Dorsolateral prefrontal cortex (tissue), 120 donors: ENCODE measurements at regions of chr2 and their contacts with region 1.

Region 1: DNA sequence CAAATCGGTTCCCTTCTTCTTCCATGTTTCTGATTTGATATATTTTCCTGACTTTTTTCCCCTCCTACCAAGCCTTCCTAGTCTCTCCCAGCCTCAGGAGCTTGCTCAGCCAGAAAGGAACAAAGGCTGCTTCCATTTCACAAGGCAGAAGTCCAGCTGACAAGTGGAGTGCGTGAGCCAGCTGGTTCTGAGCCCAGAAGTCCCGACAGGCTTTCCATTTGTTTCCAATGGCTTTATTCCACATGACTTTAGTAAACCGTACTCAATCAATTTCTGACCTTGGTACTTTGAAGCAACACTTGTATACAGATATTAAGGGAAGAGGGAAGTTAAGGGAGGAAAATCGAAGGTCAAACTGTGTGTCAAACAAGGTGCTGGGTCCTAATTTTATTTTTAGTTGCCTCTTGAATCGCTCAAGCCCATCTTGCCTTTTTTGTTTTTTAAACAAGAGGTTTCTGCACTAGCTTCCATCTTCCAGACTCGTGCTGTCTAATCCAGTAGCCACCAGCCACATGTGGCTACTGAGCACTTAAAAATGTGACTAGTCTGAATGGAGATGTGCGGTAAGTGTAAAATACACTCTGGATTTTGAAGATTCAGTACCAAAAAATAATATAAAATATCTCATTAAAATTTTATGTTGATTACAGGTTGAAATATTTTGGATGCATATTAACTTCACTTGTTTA is 36.2 kb downstream of the WIPF1 start:
- DNase-seq: peak; percentile 64 to 92 (median 84)
- H3K4me3 ChIP-seq: peak overlapping the region in 20 of 59 donors; percentile 1 to 46 (median 16)
- H3K27ac ChIP-seq: peak overlapping the region in 54 of 59 donors; percentile 3 to 86 (median 74)
- H3K27me3 ChIP-seq: no peaks in the 10 kb centered on the region
- CTCF ChIP-seq: peak in 17 of 56 donors; percentile 7 to 47 (median 19)

Region 2: DNA sequence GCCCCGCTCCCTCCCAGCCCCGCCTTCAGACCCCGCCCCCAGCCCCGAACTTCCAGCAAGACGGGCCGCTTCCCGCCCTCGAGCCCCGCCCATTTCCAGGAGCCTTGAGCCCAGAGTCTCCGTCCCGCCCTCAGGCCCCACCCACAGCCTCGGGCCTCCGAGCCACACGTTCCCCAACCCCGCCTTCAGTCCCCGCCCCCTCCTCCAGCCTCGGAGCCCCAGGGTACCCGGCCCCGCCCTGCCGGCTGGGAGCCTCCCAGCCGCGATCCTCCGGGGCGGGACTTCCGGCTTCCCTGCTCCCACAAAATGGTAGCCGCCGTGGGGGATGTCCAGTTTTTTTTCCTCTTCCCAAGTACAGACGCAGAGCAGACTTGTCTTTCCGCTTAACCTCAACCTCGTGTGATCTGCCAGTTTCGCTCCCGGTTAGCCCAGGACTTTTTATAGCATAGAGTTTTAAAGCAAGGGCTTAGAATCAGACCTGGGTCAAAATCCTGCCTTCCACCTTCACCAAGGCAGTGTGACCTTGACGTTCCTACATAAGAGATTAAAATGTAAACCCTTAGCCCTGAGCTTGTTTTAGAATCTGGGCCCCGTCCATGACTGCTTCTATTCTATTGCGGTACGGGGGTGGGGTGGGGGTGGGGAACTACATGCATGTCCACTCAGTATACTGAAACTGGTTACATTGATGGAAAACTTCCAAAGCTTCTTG is 74.2 kb before region 1 on chr2:
- intact Hi-C with region 1: loop called in 1 of 2 experiments (anchors 5 kb)
- DNase-seq: peak; percentile 93 to 99 (median 98)
- H3K4me3 ChIP-seq: peak overlapping the region; percentile 67 to 99 (median 95)
- H3K27ac ChIP-seq: peak overlapping the region in 56 of 59 donors; percentile 13 to 95 (median 82)
- H3K27me3 ChIP-seq: no peaks in the 10 kb centered on the region
- CTCF ChIP-seq: peak in 2 of 56 donors; percentile 14 to 21